ENCODE measurements at regions of chr4 and their contacts with region 1.

Region 1: DNA sequence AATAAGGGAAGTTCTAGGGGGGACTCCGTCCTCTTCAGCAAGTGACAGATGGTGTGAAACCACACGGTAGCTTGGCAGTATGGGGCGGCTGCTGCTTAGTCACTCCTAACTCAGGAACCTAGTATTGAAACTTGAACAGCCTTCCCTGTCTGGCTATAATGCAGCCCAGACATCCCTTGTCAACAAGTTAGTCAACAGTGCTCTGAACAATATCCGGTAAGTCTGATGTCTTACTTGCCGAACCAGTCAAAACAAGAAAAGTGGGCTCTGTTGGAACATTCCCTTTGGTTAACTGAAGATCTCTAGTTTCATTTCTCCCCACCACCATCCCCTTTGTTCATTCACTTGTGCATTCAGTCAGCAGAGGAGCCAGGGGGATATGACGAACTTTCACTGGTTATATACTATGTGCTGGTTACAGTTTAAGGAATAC is 18.7 kb upstream of the CXCL13 start:
- DNase-seq: peak; percentile 90
- ATAC-seq: peak; percentile 98
- H3K4me3 Mint-ChIP-seq: peak overlapping the region; percentile 21
- H3K27ac Mint-ChIP-seq: peak overlapping the region; percentile 73
- H3K4me1 Mint-ChIP-seq: peaks cover 50% of the 10 kb centered on the region
- H3K27me3 Mint-ChIP-seq: peaks cover 14% of the 10 kb centered on the region
- CTCF ChIP-seq: no peak

Region 2: DNA sequence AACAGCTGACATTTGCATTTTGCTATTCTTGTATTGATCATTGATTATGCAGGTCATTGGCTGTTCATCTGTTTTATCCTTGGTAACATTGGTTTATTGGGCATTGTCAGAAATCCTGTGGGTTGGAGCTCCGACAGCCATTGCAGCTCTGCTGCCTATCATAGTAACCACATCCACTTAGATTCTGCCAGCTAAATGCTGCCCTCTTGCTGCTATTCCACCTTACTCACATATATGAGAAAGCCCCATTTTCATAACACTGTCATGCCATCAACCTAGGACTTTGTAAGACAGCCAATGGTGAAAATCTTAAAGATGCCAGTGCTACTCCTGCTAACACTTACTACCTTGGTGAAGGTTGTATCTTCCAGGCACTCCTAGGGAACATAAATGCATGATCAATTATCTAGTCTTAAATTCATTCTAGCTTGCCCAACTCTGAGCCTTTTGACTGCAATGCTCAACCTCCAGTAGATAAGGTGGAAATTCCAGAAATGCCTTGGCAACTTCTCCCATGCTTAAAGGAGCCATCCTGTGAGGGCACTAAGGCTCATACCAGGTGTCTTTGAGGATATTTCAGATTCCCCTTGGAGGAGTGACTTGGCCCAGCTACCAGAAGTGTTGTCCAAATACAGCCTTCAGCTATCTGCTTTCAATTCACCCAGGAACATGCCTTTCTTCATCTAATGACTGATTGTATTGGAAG is 168.5 kb before region 1 on chr4:
- CTCF ChIA-PET with region 1: no interaction called
- POLR2A ChIA-PET with region 1: no interaction called
- intact Hi-C with region 1: no loop called
- DNase-seq: peak; percentile 24
- ATAC-seq: peak; percentile 68
- H3K4me3 Mint-ChIP-seq: no peak overlapping the region
- H3K27ac Mint-ChIP-seq: no peak overlapping the region
- H3K4me1 Mint-ChIP-seq: no peaks in the 10 kb centered on the region
- H3K27me3 Mint-ChIP-seq: peaks cover 7% of the 10 kb centered on the region
- CTCF ChIP-seq: peak; percentile 15

Region 3: GRCh38 chr4:77852892-77853495 is 266.0 kb after region 1 on chr4:
- CTCF ChIA-PET with region 1: no interaction called
- POLR2A ChIA-PET with region 1: no interaction called
- intact Hi-C with region 1: loop called (anchors 10 kb)
- DNase-seq: peak; percentile 87
- ATAC-seq: peak; percentile 85
- H3K4me3 Mint-ChIP-seq: peak overlapping the region; percentile 64
- H3K27ac Mint-ChIP-seq: peak overlapping the region; percentile 95
- H3K4me1 Mint-ChIP-seq: peaks cover 55% of the 10 kb centered on the region
- H3K27me3 Mint-ChIP-seq: no peaks in the 10 kb centered on the region
- CTCF ChIP-seq: no peak